Activated CD4-positive, alpha-beta memory T cell treated with anti-CD3 and anti-CD28 coated beads for 36 hours (primary cell): ENCODE measurements at regions of chr16 and their contacts with region 1.

Region 1: DNA sequence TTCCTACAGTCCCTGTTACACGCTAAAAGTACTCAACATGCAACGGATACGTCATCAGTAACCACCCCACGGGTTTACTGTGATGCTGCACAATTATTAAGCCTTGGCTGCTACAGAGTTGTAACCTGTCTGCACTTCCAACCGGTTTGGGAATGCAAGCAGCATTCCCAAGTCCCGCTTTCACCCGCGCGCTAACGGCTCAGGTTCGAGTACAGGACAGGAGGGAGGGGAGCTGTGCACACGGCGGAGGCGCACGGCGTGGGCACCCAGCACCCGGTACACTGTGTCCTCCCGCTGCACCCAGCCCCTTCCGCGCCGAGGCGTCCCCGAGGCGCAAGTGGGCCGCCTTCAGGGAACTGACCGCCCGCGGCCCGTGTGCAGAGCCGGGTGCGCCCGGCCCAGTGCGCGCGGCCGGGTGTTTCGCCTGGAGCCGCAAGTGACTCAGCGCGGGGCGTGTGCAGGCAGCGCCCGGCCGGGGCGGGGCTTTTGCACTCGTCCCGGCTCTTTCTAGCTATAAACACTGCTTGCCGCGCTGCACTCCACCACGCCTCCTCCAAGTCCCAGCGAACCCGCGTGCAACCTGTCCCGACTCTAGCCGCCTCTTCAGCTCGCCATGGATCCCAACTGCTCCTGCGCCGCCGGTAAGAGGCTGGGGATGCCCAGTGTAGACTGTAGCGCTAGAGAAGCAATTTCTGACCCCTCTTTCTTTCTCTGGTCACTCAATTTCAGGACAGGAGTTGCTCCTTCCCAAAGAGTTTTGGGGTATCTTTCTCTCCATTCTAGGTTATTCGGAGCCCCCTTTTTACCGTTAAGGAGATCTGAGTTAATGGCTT is at the start of gene MT2A:
- DNase-seq: peak; percentile 95
- H3K4me3 Mint-ChIP-seq: peak within 1 kb of the TSS; percentile 81
- H3K27ac Mint-ChIP-seq: peak within 1 kb of the TSS; percentile 79
- H3K4me1 Mint-ChIP-seq: peaks cover 57% of the 10 kb centered on the region
- H3K27me3 Mint-ChIP-seq: no peaks in the 10 kb centered on the region
- total RNA-seq, gene MT2A: 102 to 105 TPM

Region 2: GRCh38 chr16:56576585-56577293 is 31.5 kb before region 1 on chr16:
- CTCF ChIA-PET with region 1: interaction called, 6 read pairs
- POLR2A ChIA-PET with region 1: no interaction called
- intact Hi-C with region 1: loop called (anchors 2 kb)
- DNase-seq: peak; percentile 94
- H3K4me3 Mint-ChIP-seq: no peak overlapping the region
- H3K27ac Mint-ChIP-seq: no peak overlapping the region
- H3K4me1 Mint-ChIP-seq: peaks cover 4% of the 10 kb centered on the region
- H3K27me3 Mint-ChIP-seq: no peaks in the 10 kb centered on the region

Region 3: DNA sequence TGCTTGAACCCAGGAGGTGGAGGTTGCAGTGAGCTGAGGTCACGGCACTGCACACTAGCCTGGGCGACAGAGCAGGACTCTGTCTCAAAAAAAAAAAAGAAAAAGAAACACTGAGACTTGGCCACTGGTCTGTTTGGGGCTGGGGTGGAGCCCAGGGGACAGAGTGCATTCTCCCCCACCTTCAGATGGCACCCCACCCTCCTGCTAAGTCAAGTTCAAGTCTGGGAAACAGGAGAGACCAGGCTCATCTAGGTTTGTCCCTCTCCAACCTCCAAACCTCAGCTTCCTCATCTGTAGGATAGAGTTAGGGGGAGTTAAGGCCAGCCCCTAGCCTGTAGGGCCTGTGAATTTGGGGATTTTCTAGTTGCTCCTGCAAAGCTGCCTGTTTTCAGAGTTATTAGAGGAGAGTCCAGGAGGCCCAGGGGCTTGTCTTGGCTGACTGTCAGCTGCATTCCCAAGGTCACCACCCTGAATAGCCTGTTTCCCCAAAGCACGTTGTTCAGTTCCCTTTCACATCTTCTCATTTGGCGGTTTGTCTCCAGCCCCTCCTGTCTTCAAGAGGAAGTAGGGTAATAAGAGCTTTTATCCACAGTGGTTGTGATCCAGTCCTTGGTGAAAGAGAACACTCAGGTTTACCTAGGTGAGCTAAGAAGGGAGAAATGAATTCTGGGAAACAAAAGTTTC is 16.7 kb before region 1 on chr16:
- CTCF ChIA-PET with region 1: no interaction called
- POLR2A ChIA-PET with region 1: no interaction called
- intact Hi-C with region 1: no loop called
- DNase-seq: no peak
- H3K4me3 Mint-ChIP-seq: no peak overlapping the region
- H3K27ac Mint-ChIP-seq: no peak overlapping the region
- H3K4me1 Mint-ChIP-seq: peaks cover 12% of the 10 kb centered on the region
- H3K27me3 Mint-ChIP-seq: peaks cover 33% of the 10 kb centered on the region

Region 4: GRCh38 chr16:56643080-56643778 is 35.0 kb after region 1 on chr16:
- CTCF ChIA-PET with region 1: interaction called, 6 read pairs
- POLR2A ChIA-PET with region 1: no interaction called
- intact Hi-C with region 1: loop called (anchors 1 kb)
- DNase-seq: peak; percentile 89
- H3K4me3 Mint-ChIP-seq: peak overlapping the region; percentile 54
- H3K27ac Mint-ChIP-seq: no peak overlapping the region
- H3K4me1 Mint-ChIP-seq: peaks cover 18% of the 10 kb centered on the region
- H3K27me3 Mint-ChIP-seq: peaks cover 36% of the 10 kb centered on the region

Region 5: DNA sequence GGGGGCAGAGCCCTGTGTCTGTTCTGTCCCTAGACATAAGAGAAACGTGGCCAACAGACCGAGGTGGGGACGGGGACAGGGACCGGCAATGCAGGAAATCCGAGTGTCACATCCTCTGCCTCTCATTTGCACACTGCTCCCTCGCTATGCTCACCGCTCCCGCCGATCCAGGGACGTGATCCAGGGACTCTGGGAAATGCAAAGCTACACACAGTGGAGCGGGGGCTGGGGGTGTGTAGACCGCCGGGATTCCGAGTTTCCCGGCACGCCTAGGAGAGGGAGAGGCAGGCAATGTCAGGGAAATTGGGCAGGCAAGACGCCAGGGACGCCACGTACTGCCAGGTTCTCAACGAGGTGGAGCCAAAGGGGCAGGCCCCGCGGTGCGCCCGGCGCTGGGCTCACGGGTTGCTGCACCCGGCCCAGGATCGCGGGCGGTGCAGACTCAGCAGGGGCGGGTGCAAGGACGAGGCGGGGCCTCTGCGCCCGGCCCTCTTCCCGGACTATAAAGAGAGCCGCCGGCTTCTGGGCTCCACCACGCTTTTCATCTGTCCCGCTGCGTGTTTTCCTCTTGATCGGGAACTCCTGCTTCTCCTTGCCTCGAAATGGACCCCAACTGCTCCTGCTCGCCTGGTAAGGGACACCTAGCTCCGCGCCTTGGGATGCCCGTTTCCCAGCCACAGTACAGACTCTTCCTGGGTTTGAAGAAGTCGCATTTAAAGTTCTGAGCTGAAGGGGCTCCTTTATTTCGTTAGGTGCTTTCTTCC is 73.9 kb after region 1 on chr16 and contains the start of gene MT1X:
- CTCF ChIA-PET with region 1: no interaction called
- POLR2A ChIA-PET with region 1: interaction called, 4 read pairs
- intact Hi-C with region 1: loop called (anchors 1 kb)
- DNase-seq: peak; percentile 96
- H3K4me3 Mint-ChIP-seq: peak within 1 kb of the TSS; percentile 91
- H3K27ac Mint-ChIP-seq: peak within 1 kb of the TSS; percentile 93
- H3K4me1 Mint-ChIP-seq: peaks cover 22% of the 10 kb centered on the region
- H3K27me3 Mint-ChIP-seq: no peaks in the 10 kb centered on the region
- total RNA-seq, gene MT1X: 31.9 to 38.1 TPM

Region 6: GRCh38 chr16:57013229-57013628 is 405.0 kb after region 1 on chr16:
- CTCF ChIA-PET with region 1: no interaction called
- POLR2A ChIA-PET with region 1: no interaction called
- intact Hi-C with region 1: loop called (anchors 5 kb)
- DNase-seq: peak; percentile 8
- H3K4me3 Mint-ChIP-seq: peak overlapping the region; percentile 47
- H3K27ac Mint-ChIP-seq: peak overlapping the region; percentile 93
- H3K4me1 Mint-ChIP-seq: peaks cover 85% of the 10 kb centered on the region
- H3K27me3 Mint-ChIP-seq: no peaks in the 10 kb centered on the region